ENCODE measurements at regions of chr18 and their contacts with region 1.

Region 1: GRCh38 chr18:35949903-35950627 is 22.4 kb upstream of the RMP24 start:
- DNase-seq: peak; percentile 86
- H3K4me3 ChIP-seq: peak overlapping the region; percentile 13 to 74 (median 44)
- H3K27ac ChIP-seq: no peak overlapping the region
- H3K4me1 ChIP-seq: peaks cover 0 to 11% (median 9%) of the 10 kb centered on the region in 6 donors
- H3K27me3 ChIP-seq: peaks cover 0 to 15% (median 7%) of the 10 kb centered on the region in 7 donors
- CTCF ChIP-seq: peak; percentile 68 to 94 (median 88)
- POLR2A ChIP-seq: no peak

Region 2: GRCh38 chr18:35386600-35387351 is 563.3 kb before region 1 on chr18:
- intact Hi-C with region 1: loop called (anchors 5 kb)
- DNase-seq: no peak
- H3K4me3 ChIP-seq: no peak overlapping the region
- H3K27ac ChIP-seq: no peak overlapping the region
- H3K4me1 ChIP-seq: peaks cover 0 to 8% (median 5%) of the 10 kb centered on the region in 6 donors
- H3K27me3 ChIP-seq: peaks cover 0 to 18% (median 0%) of the 10 kb centered on the region in 7 donors
- CTCF ChIP-seq: peak; percentile 60 to 86 (median 79)
- POLR2A ChIP-seq: no peak

Region 3: DNA sequence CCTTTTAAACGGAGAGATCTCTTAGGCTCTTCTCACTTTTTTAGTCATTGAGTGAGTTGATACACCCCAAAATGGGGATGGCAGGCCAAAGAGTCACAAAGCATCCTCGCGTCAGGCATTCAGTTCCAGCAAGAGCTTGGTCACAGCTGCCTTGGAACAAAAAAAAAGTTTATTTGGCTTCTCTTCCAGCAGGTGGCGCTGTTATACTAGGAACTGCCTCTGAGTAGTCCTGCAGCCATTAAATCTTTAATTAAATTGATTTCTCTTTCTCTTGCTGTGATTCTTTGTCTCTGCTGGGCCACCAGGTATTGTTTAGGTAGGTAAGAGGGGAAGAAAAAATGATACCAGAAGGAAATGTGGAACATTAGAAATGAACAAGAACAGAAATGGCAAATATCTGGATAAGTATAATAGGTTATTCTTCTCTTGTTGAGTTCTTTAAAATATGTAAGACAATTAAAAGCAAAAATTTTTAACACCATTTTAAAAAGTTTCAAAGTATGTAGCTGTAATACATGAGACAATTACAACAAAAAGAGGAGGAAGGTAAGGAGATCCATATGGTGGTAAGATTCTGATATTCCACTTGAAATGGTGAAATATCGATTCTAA is 193.5 kb before region 1 on chr18:
- intact Hi-C with region 1: loop called (anchors 5 kb)
- DNase-seq: no peak
- H3K4me3 ChIP-seq: no peak overlapping the region
- H3K27ac ChIP-seq: no peak overlapping the region
- H3K4me1 ChIP-seq: peaks cover 0 to 7% (median 0%) of the 10 kb centered on the region in 6 donors
- H3K27me3 ChIP-seq: peaks cover 0 to 17% (median 0%) of the 10 kb centered on the region in 7 donors
- CTCF ChIP-seq: peak in 10 of 11 experiments; percentile 55 to 82 (median 74)
- POLR2A ChIP-seq: no peak